Caco-2 (cell line): ENCODE measurements at regions of chr10 and their contacts with region 1.

Region 1: GRCh38 chr10:98467506-98468346 is 21.0 kb upstream of the HPS1 start:
- DNase-seq: peak; percentile 80
- H3K4me3 ChIP-seq: peak overlapping the region; percentile 48
- H3K4me3 Mint-ChIP-seq: peak overlapping the region; percentile 79
- H3K27ac Mint-ChIP-seq: peak overlapping the region; percentile 39
- H3K4me1 ChIP-seq: 0 out of 2 replicates have a peak, but pooled peaks cover 3% of the 10 kb centered on the region
- H3K4me1 Mint-ChIP-seq: peaks cover 8% of the 10 kb centered on the region
- H3K27me3 ChIP-seq: no peaks in the 10 kb centered on the region
- H3K27me3 Mint-ChIP-seq: peaks cover 5% of the 10 kb centered on the region
- CTCF ChIP-seq: peak; percentile 88 to 91

Region 2: DNA sequence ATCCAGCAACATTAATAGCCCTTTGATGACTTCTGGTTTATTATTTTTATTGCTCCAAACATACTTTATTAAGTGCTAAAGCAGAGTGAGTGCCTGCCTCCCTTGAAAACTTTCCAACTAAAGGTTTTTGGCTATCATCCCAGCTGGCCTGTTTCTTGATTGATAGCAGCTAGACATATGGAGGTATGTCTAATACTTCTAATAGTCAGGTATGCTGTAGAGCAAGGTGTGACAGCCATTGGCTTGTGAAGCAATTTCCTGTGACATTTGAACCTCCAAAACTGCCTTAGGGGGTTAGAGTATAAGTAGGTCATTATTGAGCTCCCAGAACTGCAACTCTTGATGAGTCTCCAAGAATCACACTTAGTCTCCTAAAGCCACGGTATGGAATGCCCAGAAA is 255.5 kb before region 1 on chr10:
- CTCF ChIA-PET with region 1: no interaction called
- POLR2A ChIA-PET with region 1: no interaction called
- intact Hi-C with region 1: no loop called
- DNase-seq: no peak
- H3K4me3 ChIP-seq: no peak overlapping the region
- H3K4me3 Mint-ChIP-seq: no peak overlapping the region
- H3K27ac Mint-ChIP-seq: no peak overlapping the region
- H3K4me1 ChIP-seq: no peaks in the 10 kb centered on the region
- H3K4me1 Mint-ChIP-seq: no peaks in the 10 kb centered on the region
- H3K27me3 ChIP-seq: no peaks in the 10 kb centered on the region
- H3K27me3 Mint-ChIP-seq: no peaks in the 10 kb centered on the region
- CTCF ChIP-seq: no peak

Region 3: DNA sequence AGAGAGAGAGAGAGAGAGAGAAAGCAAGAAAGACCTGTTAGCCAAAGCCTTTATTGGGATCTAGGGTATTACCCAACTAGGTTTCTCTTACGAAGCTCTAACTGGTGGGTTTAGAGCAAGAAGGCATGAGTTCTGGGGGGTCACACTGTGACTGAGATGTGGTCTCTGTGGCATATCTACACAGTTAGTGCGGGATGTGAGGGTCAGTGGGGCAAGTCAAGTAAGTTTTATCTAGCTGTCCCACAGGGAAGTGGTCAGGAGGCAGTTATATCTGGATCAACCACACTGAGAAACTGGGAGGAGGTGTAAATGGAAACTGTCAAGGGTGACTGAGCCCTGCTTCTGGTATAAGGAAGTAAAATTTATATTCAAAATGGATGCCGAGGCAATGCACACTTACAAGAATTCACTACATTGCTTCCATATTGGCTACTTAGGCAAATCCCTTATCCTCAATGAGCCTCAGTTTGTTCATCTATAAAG is 310.6 kb after region 1 on chr10:
- CTCF ChIA-PET with region 1: no interaction called
- POLR2A ChIA-PET with region 1: no interaction called
- intact Hi-C with region 1: loop called (anchors 10 kb)
- DNase-seq: no peak
- H3K4me3 ChIP-seq: no peak overlapping the region
- H3K4me3 Mint-ChIP-seq: no peak overlapping the region
- H3K27ac Mint-ChIP-seq: no peak overlapping the region
- H3K4me1 ChIP-seq: no peaks in the 10 kb centered on the region
- H3K4me1 Mint-ChIP-seq: no peaks in the 10 kb centered on the region
- H3K27me3 ChIP-seq: no peaks in the 10 kb centered on the region
- H3K27me3 Mint-ChIP-seq: peaks cover 5% of the 10 kb centered on the region
- CTCF ChIP-seq: no peak

Region 4: GRCh38 chr10:99042051-99042771 is 574.5 kb after region 1 on chr10:
- CTCF ChIA-PET with region 1: no interaction called
- POLR2A ChIA-PET with region 1: no interaction called
- intact Hi-C with region 1: loop called (anchors 2 kb)
- DNase-seq: no peak
- H3K4me3 ChIP-seq: no peak overlapping the region
- H3K4me3 Mint-ChIP-seq: no peak overlapping the region
- H3K27ac Mint-ChIP-seq: no peak overlapping the region
- H3K4me1 ChIP-seq: no peaks in the 10 kb centered on the region
- H3K4me1 Mint-ChIP-seq: no peaks in the 10 kb centered on the region
- H3K27me3 ChIP-seq: no peaks in the 10 kb centered on the region
- H3K27me3 Mint-ChIP-seq: no peaks in the 10 kb centered on the region
- CTCF ChIP-seq: no peak

Region 5: DNA sequence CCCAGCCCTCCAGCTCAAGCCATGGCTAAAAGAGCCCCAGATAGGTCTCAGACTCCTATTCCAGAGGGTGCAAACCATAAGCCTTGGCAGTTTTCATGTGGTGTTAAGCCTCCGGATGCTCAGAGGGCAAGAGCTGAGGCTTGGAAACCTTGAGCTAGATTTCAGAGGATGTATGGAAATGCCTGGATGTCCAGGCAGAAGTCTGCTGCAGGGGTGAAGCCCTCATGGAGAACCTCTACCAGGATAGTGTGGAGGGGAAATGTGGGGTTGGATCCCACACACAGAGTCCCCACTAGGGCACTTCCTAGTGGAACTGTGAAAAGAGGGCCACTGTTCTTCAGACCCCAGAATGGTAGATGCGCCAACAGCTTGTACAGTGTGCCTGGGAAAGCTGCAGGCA is 781.1 kb after region 1 on chr10:
- CTCF ChIA-PET with region 1: interaction called, 29 read pairs
- POLR2A ChIA-PET with region 1: no interaction called
- intact Hi-C with region 1: loop called (anchors 1 kb)
- DNase-seq: no peak
- H3K4me3 ChIP-seq: no peak overlapping the region
- H3K4me3 Mint-ChIP-seq: no peak overlapping the region
- H3K27ac Mint-ChIP-seq: no peak overlapping the region
- H3K4me1 ChIP-seq: no peaks in the 10 kb centered on the region
- H3K4me1 Mint-ChIP-seq: no peaks in the 10 kb centered on the region
- H3K27me3 ChIP-seq: no peaks in the 10 kb centered on the region
- H3K27me3 Mint-ChIP-seq: no peaks in the 10 kb centered on the region
- CTCF ChIP-seq: no peak

Region 6: DNA sequence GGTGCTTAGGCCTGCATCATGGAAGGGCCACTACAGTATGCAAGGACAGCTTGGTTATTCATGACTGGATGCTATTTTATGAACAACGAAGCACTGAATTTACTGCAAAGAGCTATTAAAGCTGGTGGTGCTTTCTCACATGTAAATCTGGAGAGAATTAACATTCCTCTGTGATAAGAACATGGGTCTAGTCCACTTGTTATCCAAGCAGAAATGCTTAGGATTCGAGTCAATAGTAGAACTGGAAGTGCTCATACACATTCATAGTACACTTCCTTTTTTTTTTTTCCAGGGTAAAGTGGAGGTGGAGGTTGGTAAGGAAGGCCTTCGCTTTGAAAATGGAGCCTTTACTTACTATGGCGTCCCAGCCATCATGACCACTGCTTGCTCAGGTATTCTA is 896.4 kb after region 1 on chr10:
- CTCF ChIA-PET with region 1: no interaction called
- POLR2A ChIA-PET with region 1: no interaction called
- intact Hi-C with region 1: loop called (anchors 10 kb)
- DNase-seq: no peak
- H3K4me3 ChIP-seq: no peak overlapping the region
- H3K4me3 Mint-ChIP-seq: no peak overlapping the region
- H3K27ac Mint-ChIP-seq: no peak overlapping the region
- H3K4me1 ChIP-seq: no peaks in the 10 kb centered on the region
- H3K4me1 Mint-ChIP-seq: peaks cover 2% of the 10 kb centered on the region
- H3K27me3 ChIP-seq: no peaks in the 10 kb centered on the region
- H3K27me3 Mint-ChIP-seq: peaks cover 3% of the 10 kb centered on the region
- CTCF ChIP-seq: no peak